Pancreas (tissue), 10 donors: ENCODE measurements at regions of chr11 and their contacts with region 1.

Region 1: GRCh38 chr11:1694064-1694845 is 2.7 kb upstream of the KRTAP5-6 start:
- DNase-seq: peak; percentile 81 to 99 (median 92)
- ATAC-seq: peak; percentile 96 to 98 (median 98)
- H3K4me3 ChIP-seq: peak overlapping the region in 2 of 4 donors; percentile 26 to 31
- H3K27ac ChIP-seq: peak overlapping the region in 1 of 4 donors; percentile 63
- H3K4me1 ChIP-seq: peaks cover 3 to 7% (median 5%) of the 10 kb centered on the region in 3 donors
- H3K27me3 ChIP-seq: peaks cover 0 to 3% (median 0%) of the 10 kb centered on the region in 4 donors
- CTCF ChIP-seq: peak; percentile 91 to 96 (median 93)

Region 2: DNA sequence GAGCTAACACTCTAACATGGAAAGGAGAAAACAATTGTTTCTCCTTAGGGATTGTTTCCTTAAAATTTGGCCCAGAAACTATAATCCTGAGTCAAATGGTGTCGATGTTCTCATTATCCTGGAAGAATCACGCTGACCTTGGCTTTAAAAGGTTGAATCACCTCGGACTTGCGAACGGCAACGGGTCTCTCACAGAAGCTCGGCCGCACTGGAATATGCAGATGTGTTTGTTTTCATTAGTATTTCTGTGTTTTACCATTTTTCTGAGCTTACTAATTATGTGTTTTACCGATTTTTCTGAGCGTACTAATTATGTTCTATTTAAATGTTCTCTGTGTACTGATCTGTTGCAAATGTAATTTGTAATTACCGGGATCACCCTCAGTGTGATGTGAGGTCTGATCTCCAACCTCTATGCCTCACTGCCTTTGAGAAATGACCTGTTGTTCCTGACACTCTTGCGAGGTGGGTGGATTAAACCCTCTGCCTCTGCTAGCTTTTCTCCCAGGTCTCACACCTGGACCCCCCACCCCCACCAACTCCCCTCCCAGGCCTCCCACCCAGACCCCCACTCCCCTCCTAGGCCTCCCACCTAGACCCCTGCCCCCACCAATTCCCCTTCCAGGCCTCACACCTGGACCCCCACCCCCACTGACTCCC is 342.8 kb before region 1 on chr11:
- intact Hi-C with region 1: no loop called
- DNase-seq: peak in 1 of 6 donors; percentile 2
- ATAC-seq: no peak
- H3K4me3 ChIP-seq: no peak overlapping the region
- H3K27ac ChIP-seq: no peak overlapping the region
- H3K4me1 ChIP-seq: peaks cover 0 to 7% (median 0%) of the 10 kb centered on the region in 3 donors
- H3K27me3 ChIP-seq: no peaks in the 10 kb centered on the region
- CTCF ChIP-seq: no peak

Region 3: GRCh38 chr11:1546536-1547400 is 147.5 kb before region 1 on chr11:
- intact Hi-C with region 1: no loop called
- DNase-seq: peak; percentile 49 to 87 (median 64)
- ATAC-seq: peak; percentile 59 to 76 (median 72)
- H3K4me3 ChIP-seq: peak overlapping the region; percentile 23 to 59 (median 46)
- H3K27ac ChIP-seq: no peak overlapping the region
- H3K4me1 ChIP-seq: peaks cover 5 to 17% (median 15%) of the 10 kb centered on the region in 3 donors
- H3K27me3 ChIP-seq: no peaks in the 10 kb centered on the region
- CTCF ChIP-seq: peak; percentile 45 to 72 (median 59)

Region 4: DNA sequence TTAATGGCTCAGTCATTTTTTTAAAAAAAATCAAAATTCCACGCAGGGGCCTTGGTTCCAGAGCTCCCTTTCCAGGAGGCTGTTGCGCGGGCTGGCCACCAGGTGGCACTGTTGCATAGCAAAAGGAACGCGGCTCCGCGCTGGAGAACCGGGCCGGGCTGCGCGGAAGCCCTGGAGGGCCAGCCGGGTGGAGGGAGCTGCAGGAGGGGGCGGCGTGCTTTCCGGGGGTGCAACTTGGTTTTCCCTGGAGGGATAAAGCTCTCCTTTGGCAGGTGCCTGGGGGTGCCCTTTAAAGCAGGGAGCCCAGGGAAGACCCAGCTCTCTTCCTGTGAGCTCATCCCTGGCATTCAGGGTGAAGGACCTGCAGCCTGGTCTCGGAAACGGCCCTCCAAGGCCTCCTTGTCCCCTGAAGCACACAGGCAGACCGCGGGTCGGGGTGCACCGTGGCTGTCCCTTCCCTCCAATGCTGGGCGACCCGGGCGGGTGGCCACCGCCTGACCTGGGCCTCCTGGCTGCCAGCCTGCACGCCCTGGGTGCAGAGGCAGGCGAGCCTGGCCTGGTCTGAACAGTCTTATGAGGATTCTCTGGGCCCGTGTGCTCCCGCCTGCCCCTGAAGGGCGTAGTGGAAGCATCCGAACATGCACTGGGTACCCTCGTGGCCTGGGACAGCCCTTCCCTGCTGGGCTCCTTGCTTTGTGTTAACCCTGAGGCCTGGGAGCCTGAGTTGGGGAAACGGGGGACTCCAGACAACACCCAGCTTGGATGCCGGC is 41.3 kb before region 1 on chr11:
- intact Hi-C with region 1: loop called in 1 of 3 experiments (anchors 5 kb)
- DNase-seq: peak; percentile 49 to 94 (median 83)
- ATAC-seq: peak; percentile 79 to 98 (median 95)
- H3K4me3 ChIP-seq: no peak overlapping the region
- H3K27ac ChIP-seq: no peak overlapping the region
- H3K4me1 ChIP-seq: no peaks in the 10 kb centered on the region
- H3K27me3 ChIP-seq: no peaks in the 10 kb centered on the region
- CTCF ChIP-seq: peak; percentile 97 to 99 (median 98)

Region 5: DNA sequence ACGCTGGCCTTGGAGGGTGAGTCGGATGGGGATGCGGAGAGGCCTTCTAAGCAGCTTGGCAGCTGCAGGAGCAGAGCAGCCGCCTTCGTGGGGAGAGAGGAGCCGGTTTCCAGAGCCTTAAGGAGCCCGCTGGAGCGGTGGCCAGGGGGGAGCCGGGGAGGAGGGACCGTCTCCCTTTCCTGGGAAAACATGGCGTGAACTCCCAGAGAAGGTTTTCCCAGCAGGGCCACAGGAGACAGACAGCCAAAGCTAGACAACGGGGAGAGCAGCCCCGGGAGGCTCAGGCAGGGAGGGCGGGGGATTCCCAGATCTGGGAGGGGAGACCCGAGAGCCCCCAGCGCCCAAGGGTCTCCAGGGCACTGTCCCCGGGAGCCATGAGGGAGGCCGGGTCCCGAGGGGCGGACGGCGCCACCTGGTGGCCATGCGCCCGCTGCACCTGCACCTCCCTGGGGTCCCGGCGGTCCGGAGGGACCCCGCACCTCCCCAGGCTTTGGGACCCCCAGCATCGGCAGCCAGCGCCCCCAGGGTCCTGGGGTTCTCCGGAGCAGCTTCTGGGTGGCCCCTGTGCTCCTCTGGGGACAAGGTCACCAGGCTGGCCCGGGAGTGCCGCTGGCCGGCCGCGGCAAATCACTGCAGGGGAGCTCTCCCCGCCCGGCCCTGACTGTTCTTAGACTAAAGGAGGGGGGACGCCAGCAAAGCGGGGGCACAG is 138.1 kb after region 1 on chr11:
- intact Hi-C with region 1: loop called in 2 of 3 experiments (anchors 5 kb)
- DNase-seq: peak in 5 of 6 donors; percentile 45 to 92 (median 78)
- ATAC-seq: peak; percentile 22 to 42 (median 26)
- H3K4me3 ChIP-seq: peak overlapping the region in 1 of 4 donors; percentile 17
- H3K27ac ChIP-seq: peak overlapping the region; percentile 13 to 96 (median 89)
- H3K4me1 ChIP-seq: peaks cover 39 to 53% (median 43%) of the 10 kb centered on the region in 3 donors
- H3K27me3 ChIP-seq: no peaks in the 10 kb centered on the region
- CTCF ChIP-seq: peak; percentile 94 to 98 (median 96)

Region 6: GRCh38 chr11:1921574-1922141 is 227.4 kb after region 1 on chr11:
- intact Hi-C with region 1: loop called in 1 of 3 experiments (anchors 10 kb)
- DNase-seq: peak in 3 of 6 donors; percentile 43 to 58 (median 58)
- ATAC-seq: peak in 2 of 4 donors; percentile 7 to 32
- H3K4me3 ChIP-seq: no peak overlapping the region
- H3K27ac ChIP-seq: no peak overlapping the region
- H3K4me1 ChIP-seq: no peaks in the 10 kb centered on the region
- H3K27me3 ChIP-seq: no peaks in the 10 kb centered on the region
- CTCF ChIP-seq: no peak